Activated CD4-positive, alpha-beta T cell treated with anti-CD3 and anti-CD28 coated beads for 36 hours (primary cell): ENCODE measurements at regions of chr16 and their contacts with region 1.

Region 1: DNA sequence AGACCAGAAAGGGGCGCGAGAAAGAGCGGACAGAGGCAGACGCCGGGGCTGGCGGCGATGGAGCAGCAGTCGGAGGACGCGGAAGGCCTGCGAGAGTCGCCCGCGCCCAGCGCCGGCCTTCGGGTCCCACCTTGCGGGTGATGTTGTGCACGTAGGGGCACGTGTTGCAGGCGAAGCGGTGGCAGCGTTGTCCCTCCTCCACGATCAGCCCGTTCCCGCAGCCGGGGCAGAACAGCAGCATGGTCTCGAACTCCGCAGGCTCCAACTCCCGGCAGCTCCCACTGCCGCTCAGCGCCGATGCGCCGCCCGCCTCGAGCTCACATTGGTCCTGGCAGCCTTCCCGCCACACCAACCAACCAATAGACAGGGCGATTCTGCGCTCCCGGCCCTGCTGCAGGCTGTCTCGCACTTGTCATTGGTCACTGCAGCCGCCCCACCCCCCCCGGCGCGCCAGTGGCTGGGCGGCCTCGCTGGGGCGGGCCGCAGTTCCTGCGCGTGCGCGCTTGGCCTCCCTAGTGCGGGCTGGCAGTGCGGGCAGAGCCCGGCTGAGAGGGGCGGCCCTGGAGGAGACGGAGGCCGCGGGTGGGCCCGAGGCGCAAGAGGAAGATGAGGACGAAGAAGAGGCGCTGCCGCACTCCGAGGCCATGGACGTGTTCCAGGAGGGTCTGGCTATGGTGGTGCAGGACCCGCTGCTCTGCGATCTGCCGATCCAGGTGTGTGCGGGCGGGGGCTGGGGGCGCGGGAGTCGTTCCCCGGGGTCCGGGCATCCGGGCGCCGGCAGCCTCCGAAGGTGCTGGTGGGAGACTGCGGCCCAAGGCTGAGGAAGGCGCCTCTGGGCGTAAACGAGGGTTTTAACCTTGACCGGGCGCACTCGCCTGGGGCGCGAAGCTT is at the starts of genes POLR3K and SNRNP25:
- DNase-seq: peak; percentile 100
- ATAC-seq: peak; percentile 98
- H3K4me3 Mint-ChIP-seq: peak within 1 kb of the TSS; percentile 94
- H3K27ac Mint-ChIP-seq: peak within 1 kb of the TSS; percentile 90
- H3K4me1 Mint-ChIP-seq: peaks cover 30% of the 10 kb centered on the region
- H3K27me3 Mint-ChIP-seq: no peaks in the 10 kb centered on the region
- total RNA-seq, gene POLR3K: 31.9 to 46.8 TPM
- total RNA-seq, gene SNRNP25: 42.5 to 50.0 TPM

Region 2: DNA sequence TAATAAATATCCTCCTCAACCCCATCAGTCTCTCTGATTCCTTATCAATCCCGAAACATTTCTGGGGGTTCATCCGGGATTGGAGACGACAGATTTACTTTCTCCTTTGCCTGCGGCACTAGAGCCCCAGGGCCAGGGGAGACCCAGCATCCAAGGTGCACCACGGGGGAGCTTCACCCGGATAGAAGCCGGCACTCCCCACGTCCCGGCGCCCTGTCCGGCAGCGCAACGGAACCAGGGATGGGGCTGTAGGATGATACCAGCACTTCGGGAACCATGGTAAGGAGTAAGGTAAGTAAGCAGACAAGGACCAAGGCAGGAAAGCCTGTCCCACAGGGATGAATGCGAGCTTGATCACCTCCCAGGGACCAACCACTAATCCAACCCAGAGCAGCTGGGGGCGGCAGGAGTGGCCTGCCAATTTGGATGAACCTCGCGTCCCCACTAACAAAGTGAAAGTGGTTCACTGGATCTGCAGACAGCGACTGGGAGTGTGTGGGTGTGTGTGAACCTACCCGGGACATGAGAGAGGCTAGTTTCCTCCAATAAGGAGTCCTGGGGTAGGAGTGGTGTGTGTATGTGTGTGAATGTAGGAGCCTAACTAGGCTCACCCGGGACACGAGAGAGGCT is 12.0 kb before region 1 on chr16:
- CTCF ChIA-PET with region 1: no interaction called
- POLR2A ChIA-PET with region 1: interaction called, 4 read pairs
- intact Hi-C with region 1: loop called in 1 of 2 experiments (anchors 1 kb)
- DNase-seq: no peak
- ATAC-seq: no peak
- H3K4me3 Mint-ChIP-seq: no peak overlapping the region
- H3K27ac Mint-ChIP-seq: no peak overlapping the region
- H3K4me1 Mint-ChIP-seq: peaks cover 28% of the 10 kb centered on the region
- H3K27me3 Mint-ChIP-seq: no peaks in the 10 kb centered on the region

Region 3: GRCh38 chr16:77807-78443 is 24.3 kb after region 1 on chr16 and contains the start of gene MPG:
- CTCF ChIA-PET with region 1: no interaction called
- POLR2A ChIA-PET with region 1: interaction called, 4 read pairs
- intact Hi-C with region 1: loop called in 1 of 2 experiments (anchors 1 kb)
- DNase-seq: peak; percentile 91
- ATAC-seq: peak; percentile 87
- H3K4me3 Mint-ChIP-seq: peak within 1 kb of the TSS; percentile 87
- H3K27ac Mint-ChIP-seq: peak within 1 kb of the TSS; percentile 83
- H3K4me1 Mint-ChIP-seq: peaks cover 30% of the 10 kb centered on the region
- H3K27me3 Mint-ChIP-seq: peaks cover 10% of the 10 kb centered on the region
- total RNA-seq, gene MPG: 47.0 to 57.0 TPM

Region 4: DNA sequence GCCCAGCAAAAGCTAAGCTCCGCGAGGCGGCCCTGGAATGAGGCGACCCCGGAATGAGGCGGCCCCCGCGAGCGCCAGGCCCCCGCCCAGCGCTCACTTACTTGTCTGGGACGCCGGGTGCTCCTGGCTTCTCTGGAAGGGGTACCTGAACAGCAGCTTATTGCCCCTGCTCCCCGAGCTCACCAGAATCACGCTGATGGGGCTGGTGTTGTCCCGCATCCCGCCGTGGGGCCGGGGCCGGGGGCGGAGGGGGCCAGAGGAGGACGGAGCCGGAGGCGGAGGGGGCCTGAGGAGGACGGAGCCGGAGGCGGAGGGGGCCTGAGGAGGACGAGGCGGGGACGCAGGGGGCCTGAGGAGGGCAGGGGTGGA is 84.4 kb after region 1 on chr16:
- CTCF ChIA-PET with region 1: no interaction called
- POLR2A ChIA-PET with region 1: no interaction called
- intact Hi-C with region 1: loop called in 1 of 2 experiments (anchors 1 kb)
- DNase-seq: peak; percentile 43
- ATAC-seq: peak; percentile 8
- H3K4me3 Mint-ChIP-seq: peak overlapping the region; percentile 78
- H3K27ac Mint-ChIP-seq: peak overlapping the region; percentile 81
- H3K4me1 Mint-ChIP-seq: peaks cover 24% of the 10 kb centered on the region
- H3K27me3 Mint-ChIP-seq: no peaks in the 10 kb centered on the region

Region 5: DNA sequence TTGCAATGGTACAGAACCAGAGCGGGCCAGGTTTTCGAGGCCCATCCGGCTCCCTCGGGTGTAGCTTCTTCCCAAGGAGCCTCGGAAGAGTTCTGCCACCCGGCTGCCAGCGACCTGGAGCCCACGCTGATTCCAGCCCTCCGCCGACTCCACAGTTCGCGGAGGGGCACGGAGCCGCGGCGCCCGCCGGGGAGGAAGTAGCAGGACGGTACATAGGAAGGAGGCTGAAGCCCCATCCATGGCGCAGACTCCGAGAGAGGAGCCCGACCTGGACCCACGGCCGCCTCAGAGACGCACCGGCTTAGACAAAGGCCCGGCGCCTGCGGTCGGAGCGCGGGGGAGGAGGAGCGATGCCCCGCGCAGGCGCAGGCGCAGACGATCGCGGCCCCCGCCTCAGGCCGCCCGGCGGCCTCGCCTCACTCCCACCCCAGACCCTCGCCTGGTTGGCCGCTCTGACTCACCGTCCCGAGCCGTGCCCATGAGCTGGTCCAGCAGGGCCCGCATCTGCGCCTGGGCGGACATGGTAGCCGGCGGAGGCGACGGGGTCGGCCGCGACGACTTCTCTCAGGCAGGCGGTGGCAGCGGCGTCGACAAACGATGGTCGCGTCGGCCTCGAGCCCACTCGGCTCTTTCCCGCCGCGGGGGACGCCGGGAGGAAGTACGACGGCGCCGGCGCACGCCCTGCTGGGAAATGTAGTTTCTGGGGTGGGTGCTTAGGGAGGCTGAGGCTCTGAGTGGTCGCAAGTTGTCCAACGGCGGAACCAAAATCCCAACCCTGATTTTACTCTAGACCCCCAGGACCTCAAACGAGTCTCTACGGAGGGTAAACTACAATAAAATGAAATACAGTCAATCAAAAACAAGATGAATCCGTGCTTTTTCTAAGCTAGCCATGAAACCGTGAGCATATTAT is 175.5 kb after region 1 on chr16 and contains the start of gene LUC7L:
- CTCF ChIA-PET with region 1: no interaction called
- POLR2A ChIA-PET with region 1: no interaction called
- intact Hi-C with region 1: loop called in 1 of 2 experiments (anchors 1 kb)
- DNase-seq: peak; percentile 93
- ATAC-seq: peak; percentile 90
- H3K4me3 Mint-ChIP-seq: peak within 1 kb of the TSS; percentile 92
- H3K27ac Mint-ChIP-seq: peak within 1 kb of the TSS; percentile 85
- H3K4me1 Mint-ChIP-seq: peaks cover 30% of the 10 kb centered on the region
- H3K27me3 Mint-ChIP-seq: no peaks in the 10 kb centered on the region
- total RNA-seq, gene LUC7L: 44.6 to 50.1 TPM

Region 6: DNA sequence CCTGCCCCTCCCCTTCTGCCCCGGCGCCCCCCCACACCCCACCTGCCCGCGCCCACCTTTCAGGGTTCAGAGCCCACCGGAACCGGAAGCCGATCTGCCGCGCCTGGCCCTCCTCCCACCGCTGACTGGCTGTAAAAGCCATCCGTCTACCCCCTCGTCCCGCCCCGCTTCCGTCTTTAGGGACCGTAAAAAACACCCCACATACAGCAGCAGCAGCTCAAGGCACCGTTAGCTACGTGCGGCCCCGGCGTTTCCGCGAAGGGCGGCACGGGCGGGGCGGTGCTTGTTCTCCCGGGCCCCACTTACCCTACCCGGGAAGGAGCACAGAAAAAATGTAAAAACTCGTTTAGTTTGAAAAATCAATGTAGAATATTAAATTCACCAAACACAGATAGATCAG is 316.9 kb after region 1 on chr16 and contains the start of gene MRPL28:
- CTCF ChIA-PET with region 1: no interaction called
- POLR2A ChIA-PET with region 1: no interaction called
- intact Hi-C with region 1: loop called in 1 of 2 experiments (anchors 1 kb)
- DNase-seq: peak; percentile 97
- ATAC-seq: peak; percentile 100
- H3K4me3 Mint-ChIP-seq: peak within 1 kb of the TSS; percentile 78
- H3K27ac Mint-ChIP-seq: peak within 1 kb of the TSS; percentile 92
- H3K4me1 Mint-ChIP-seq: peaks cover 17% of the 10 kb centered on the region
- H3K27me3 Mint-ChIP-seq: no peaks in the 10 kb centered on the region
- total RNA-seq, gene MRPL28: 90.2 to 94.4 TPM

Region 7: GRCh38 chr16:410516-411178 is 357.1 kb after region 1 on chr16:
- CTCF ChIA-PET with region 1: no interaction called
- POLR2A ChIA-PET with region 1: no interaction called
- intact Hi-C with region 1: no loop called
- DNase-seq: no peak
- ATAC-seq: no peak
- H3K4me3 Mint-ChIP-seq: no peak overlapping the region
- H3K27ac Mint-ChIP-seq: no peak overlapping the region
- H3K4me1 Mint-ChIP-seq: no peaks in the 10 kb centered on the region
- H3K27me3 Mint-ChIP-seq: no peaks in the 10 kb centered on the region